ENCODE measurements at regions of chr1 and their contacts with region 1.

Region 1: GRCh38 chr1:212608209-212608955 is at the start of gene ATF3:
- DNase-seq: peak; percentile 81 to 100 (median 99)
- H3K4me3 ChIP-seq: peak within 1 kb of the TSS; percentile 49 to 90 (median 79)
- H3K27ac ChIP-seq: peak within 1 kb of the TSS; percentile 58 to 98 (median 93)
- H3K27me3 ChIP-seq: peaks cover 0 to 25% (median 0%) of the 10 kb centered on the region in 45 donors
- CTCF ChIP-seq: peak in 11 of 56 donors; percentile 1 to 27 (median 9)
- total RNA-seq, gene ATF3: 2.2 to 116 (median 11.2) TPM

Region 2: GRCh38 chr1:212477014-212477679 is 131.2 kb before region 1 on chr1:
- intact Hi-C with region 1: loop called (anchors 1 to 5 kb)
- DNase-seq: peak; percentile 66 to 91 (median 86)
- H3K4me3 ChIP-seq: peak overlapping the region in 16 of 59 donors; percentile 2 to 42 (median 26)
- H3K27ac ChIP-seq: peak overlapping the region in 42 of 59 donors; percentile 1 to 83 (median 62)
- H3K27me3 ChIP-seq: no peaks in the 10 kb centered on the region
- CTCF ChIP-seq: peak; percentile 81 to 97 (median 90)

Region 3: GRCh38 chr1:212482384-212483281 is 125.7 kb before region 1 on chr1:
- intact Hi-C with region 1: loop called (anchors 1 to 5 kb)
- DNase-seq: no peak
- H3K4me3 ChIP-seq: no peak overlapping the region
- H3K27ac ChIP-seq: no peak overlapping the region
- H3K27me3 ChIP-seq: no peaks in the 10 kb centered on the region
- CTCF ChIP-seq: no peak

Region 4: GRCh38 chr1:212529211-212529741 is 79.1 kb before region 1 on chr1:
- intact Hi-C with region 1: no loop called
- DNase-seq: no peak
- H3K4me3 ChIP-seq: peak overlapping the region in 26 of 59 donors; percentile 3 to 46 (median 16)
- H3K27ac ChIP-seq: peak overlapping the region in 49 of 59 donors; percentile 4 to 85 (median 53)
- H3K27me3 ChIP-seq: no peaks in the 10 kb centered on the region
- CTCF ChIP-seq: no peak

Region 5: GRCh38 chr1:212558693-212559480 is 49.5 kb before region 1 on chr1:
- intact Hi-C with region 1: loop called in 1 of 2 experiments (anchors 5 kb)
- DNase-seq: peak; percentile 84 to 92 (median 90)
- H3K4me3 ChIP-seq: peak overlapping the region; percentile 55 to 97 (median 79)
- H3K27ac ChIP-seq: peak overlapping the region; percentile 63 to 98 (median 93)
- H3K27me3 ChIP-seq: no peaks in the 10 kb centered on the region
- CTCF ChIP-seq: peak in 2 of 56 donors; percentile 18 to 36

Region 6: GRCh38 chr1:212566522-212567479 is 41.6 kb before region 1 on chr1:
- intact Hi-C with region 1: loop called in 1 of 2 experiments (anchors 5 kb)
- DNase-seq: peak in 1 of 10 donors; percentile 35
- H3K4me3 ChIP-seq: peak overlapping the region; percentile 39 to 79 (median 64)
- H3K27ac ChIP-seq: peak overlapping the region in 53 of 59 donors; percentile 7 to 84 (median 52)
- H3K27me3 ChIP-seq: no peaks in the 10 kb centered on the region
- CTCF ChIP-seq: peak in 6 of 56 donors; percentile 4 to 12 (median 9)

Region 7: GRCh38 chr1:212671342-212672031 is 63.1 kb after region 1 on chr1:
- intact Hi-C with region 1: loop called in 1 of 2 experiments (anchors 2 kb)
- DNase-seq: peak in 9 of 10 donors; percentile 8 to 77 (median 62)
- H3K4me3 ChIP-seq: peak overlapping the region in 16 of 59 donors; percentile 2 to 37 (median 20)
- H3K27ac ChIP-seq: peak overlapping the region in 18 of 59 donors; percentile 2 to 72 (median 26)
- H3K27me3 ChIP-seq: no peaks in the 10 kb centered on the region
- CTCF ChIP-seq: no peak

Region 8: DNA sequence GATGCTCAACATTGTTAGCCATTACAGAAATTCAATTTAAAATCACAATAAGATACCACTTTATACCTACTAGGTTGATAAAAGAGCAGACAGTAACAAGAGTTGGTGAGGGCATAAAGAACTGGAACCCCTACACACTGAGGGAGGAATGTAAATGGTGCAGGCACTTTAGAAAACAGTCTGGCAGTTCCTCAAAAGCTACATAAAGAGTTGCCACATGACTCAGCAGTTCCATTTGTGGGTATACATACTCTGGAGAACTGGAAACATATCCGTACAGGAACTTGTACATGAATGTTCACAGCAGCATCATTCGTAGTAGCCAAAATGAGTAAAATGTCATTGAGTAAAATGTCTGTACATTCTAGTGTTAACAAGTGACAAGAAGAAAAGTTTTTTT is 166.2 kb after region 1 on chr1:
- intact Hi-C with region 1: no loop called
- DNase-seq: no peak
- H3K4me3 ChIP-seq: no peak overlapping the region
- H3K27ac ChIP-seq: no peak overlapping the region
- H3K27me3 ChIP-seq: no peaks in the 10 kb centered on the region
- CTCF ChIP-seq: no peak

Region 9: GRCh38 chr1:212791676-212792395 is 183.5 kb after region 1 on chr1 and contains the starts of genes NSL1 and TATDN3:
- intact Hi-C with region 1: loop called in 1 of 2 experiments (anchors 5 kb)
- DNase-seq: peak; percentile 76 to 93 (median 87)
- H3K4me3 ChIP-seq: peak within 1 kb of the TSS; percentile 68 to 100 (median 91)
- H3K27ac ChIP-seq: peak within 1 kb of the TSS; percentile 88 to 99 (median 97)
- H3K27me3 ChIP-seq: no peaks in the 10 kb centered on the region
- CTCF ChIP-seq: peak in 45 of 56 donors; percentile 2 to 68 (median 34)
- total RNA-seq, gene NSL1: 33.9 to 65.0 (median 45.3) TPM
- total RNA-seq, gene TATDN3: 17.4 to 66.3 (median 32.1) TPM